PC-3 (cell line): ENCODE measurements at regions of chr11 and their contacts with region 1.

Region 1: GRCh38 chr11:124108156-124108555 is 7.1 kb upstream of the VWA5A start:
- DNase-seq: peak; percentile 53
- ATAC-seq: peak; percentile 76
- H3K4me3 ChIP-seq: no peak overlapping the region
- H3K27ac ChIP-seq: no peak overlapping the region
- H3K4me1 ChIP-seq: no peaks in the 10 kb centered on the region
- H3K27me3 ChIP-seq: peaks cover 52% of the 10 kb centered on the region
- CTCF ChIP-seq: peak; percentile 56

Region 2: GRCh38 chr11:124143034-124143433 is 34.9 kb after region 1 on chr11:
- CTCF ChIA-PET with region 1: no interaction called
- POLR2A ChIA-PET with region 1: no interaction called
- intact Hi-C with region 1: no loop called
- DNase-seq: no peak
- ATAC-seq: no peak
- H3K4me3 ChIP-seq: no peak overlapping the region
- H3K27ac ChIP-seq: no peak overlapping the region
- H3K4me1 ChIP-seq: no peaks in the 10 kb centered on the region
- H3K27me3 ChIP-seq: peaks cover 61% of the 10 kb centered on the region
- CTCF ChIP-seq: no peak

Region 3: GRCh38 chr11:124194698-124195410 is 86.7 kb after region 1 on chr11:
- CTCF ChIA-PET with region 1: no interaction called
- POLR2A ChIA-PET with region 1: no interaction called
- intact Hi-C with region 1: loop called (anchors 2 kb)
- DNase-seq: peak; percentile 79
- ATAC-seq: peak; percentile 95
- H3K4me3 ChIP-seq: no peak overlapping the region
- H3K27ac ChIP-seq: no peak overlapping the region
- H3K4me1 ChIP-seq: no peaks in the 10 kb centered on the region
- H3K27me3 ChIP-seq: no peaks in the 10 kb centered on the region; the same call in 1 of the 2 replicates
- CTCF ChIP-seq: peak; percentile 95

Region 4: DNA sequence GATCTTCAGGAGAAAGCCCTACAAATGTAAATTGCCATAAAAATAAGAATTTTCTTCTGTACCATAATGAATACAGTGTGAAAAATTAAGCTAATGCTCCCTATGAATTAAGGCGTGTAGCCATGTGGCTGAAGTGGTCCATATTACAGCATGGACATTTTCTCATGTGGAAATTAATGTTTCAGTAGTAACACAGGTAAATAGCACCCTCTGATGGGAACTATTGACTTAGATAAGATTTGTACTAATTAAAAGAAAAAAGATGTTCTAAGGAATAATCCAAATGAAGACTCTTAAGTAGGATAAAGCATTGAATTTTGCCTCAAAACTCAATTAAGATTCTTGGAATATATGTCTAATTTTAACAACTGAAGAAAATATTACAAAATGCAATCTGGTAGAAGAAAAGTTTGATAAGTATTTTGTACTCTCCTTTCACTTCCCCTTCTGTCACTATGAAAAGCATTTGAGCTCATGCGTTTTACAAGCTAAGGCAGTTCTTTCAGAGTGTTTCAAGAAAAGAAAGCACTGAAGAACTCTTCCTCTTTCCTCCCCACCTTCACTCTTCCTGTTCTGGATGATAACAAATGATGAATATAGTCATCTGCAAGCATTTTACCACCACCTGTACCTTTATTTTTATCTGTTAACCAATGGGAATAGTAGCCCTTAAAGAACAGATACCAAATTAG is 221.8 kb after region 1 on chr11:
- CTCF ChIA-PET with region 1: no interaction called
- POLR2A ChIA-PET with region 1: no interaction called
- intact Hi-C with region 1: loop called (anchors 1 kb)
- DNase-seq: peak; percentile 30
- ATAC-seq: no peak; the same call in 1 of the 2 replicates
- H3K4me3 ChIP-seq: no peak overlapping the region
- H3K27ac ChIP-seq: no peak overlapping the region
- H3K4me1 ChIP-seq: no peaks in the 10 kb centered on the region
- H3K27me3 ChIP-seq: peaks cover 68% of the 10 kb centered on the region
- CTCF ChIP-seq: peak; percentile 40; the same call in 1 of the 2 replicates

Region 5: DNA sequence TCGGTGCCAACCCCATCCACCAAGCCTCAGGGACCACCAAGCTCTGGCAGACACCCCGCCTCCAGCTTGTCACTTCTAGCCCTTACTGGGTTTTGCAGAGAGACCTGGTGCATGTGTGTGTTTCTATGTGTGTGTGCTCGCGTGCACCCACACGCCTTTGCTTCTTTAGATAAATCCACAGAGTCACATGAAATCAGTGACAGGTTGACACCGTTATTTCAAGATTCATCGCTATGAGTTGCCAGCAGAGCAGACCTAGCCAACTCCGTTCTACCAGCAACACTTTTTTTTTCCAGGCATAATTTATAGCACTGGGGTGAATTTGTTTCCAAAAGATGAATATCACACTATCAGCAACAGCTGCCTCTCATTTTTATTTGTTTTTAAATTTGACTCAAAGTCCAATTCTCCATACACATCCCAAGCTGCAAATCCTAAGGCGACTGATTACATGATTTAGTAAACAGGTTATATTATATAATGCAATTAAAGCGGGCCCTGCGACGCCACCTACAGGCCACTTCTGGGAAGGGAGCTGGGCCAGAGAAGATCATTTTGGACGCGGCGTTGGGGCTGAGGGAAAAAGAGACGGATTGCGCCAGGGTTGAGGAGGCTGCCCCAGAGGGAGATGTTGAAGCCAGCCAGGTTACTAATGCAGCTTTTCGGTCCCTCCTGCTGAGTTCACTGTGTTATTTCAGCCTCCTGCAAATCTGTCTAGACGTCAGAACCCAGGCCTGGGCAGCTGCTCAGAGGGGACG is 1237.4 kb after region 1 on chr11:
- CTCF ChIA-PET with region 1: no interaction called
- POLR2A ChIA-PET with region 1: no interaction called
- intact Hi-C with region 1: no loop called
- DNase-seq: peak; percentile 74
- ATAC-seq: peak; percentile 81
- H3K4me3 ChIP-seq: no peak overlapping the region
- H3K27ac ChIP-seq: no peak overlapping the region
- H3K4me1 ChIP-seq: no peaks in the 10 kb centered on the region
- H3K27me3 ChIP-seq: peaks cover 44% of the 10 kb centered on the region
- CTCF ChIP-seq: peak; percentile 96